HEK293 (cell line): ENCODE measurements at regions of chr16 and their contacts with region 1.

Region 1: DNA sequence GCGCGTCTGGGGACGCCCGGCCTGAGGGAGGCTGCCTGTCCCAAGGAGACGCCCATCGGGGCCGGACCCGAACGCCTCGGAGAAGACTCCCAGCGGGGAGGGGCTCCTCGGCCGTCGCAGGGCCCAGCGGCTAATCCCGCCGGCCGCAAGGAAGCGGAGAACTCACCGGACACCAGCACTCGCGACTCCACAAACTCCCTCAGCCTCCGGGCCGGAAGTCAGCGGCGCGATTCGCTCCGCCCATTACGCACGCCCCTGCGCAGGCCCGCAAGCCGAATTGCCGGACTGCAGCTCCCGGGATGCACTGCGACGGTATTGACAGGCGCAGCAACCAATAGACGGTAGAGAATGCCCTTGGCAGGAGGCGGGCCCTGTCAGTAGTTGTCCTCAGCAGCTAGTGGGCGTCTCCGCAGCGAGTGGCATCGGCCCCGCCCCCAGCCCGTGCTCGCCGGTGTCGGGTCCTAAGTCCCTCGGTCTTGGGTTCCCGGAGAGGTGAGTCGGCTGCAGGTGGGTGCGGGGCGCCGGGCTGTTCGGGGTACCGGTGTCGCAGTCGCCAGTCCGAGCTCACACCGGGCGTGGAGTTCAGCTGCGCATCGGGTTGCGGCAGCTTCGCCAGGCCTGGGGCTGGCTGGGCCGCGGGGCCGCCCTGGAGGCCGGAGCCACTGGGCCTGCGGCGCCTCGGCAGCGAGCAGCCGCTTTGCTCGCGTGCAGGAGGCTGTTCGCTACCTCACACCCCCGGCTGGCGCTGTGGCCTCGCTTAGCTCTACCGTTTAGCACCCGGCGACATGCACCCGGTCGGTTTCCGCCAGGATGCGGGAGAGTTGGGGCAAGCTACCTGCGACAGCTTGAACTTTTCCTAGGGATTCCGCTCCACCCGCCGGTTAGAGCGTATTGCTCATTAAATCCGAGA is at the starts of genes ZNF174 and ZSCAN32:
- H3K4me3 ChIP-seq: peak within 1 kb of the TSS; percentile 95
- H3K27ac ChIP-seq: peak within 1 kb of the TSS; percentile 71; the same call in 1 of the 2 replicates
- H3K4me1 ChIP-seq: no peaks in the 10 kb centered on the region
- CTCF ChIP-seq: peak; percentile 70

Region 2: DNA sequence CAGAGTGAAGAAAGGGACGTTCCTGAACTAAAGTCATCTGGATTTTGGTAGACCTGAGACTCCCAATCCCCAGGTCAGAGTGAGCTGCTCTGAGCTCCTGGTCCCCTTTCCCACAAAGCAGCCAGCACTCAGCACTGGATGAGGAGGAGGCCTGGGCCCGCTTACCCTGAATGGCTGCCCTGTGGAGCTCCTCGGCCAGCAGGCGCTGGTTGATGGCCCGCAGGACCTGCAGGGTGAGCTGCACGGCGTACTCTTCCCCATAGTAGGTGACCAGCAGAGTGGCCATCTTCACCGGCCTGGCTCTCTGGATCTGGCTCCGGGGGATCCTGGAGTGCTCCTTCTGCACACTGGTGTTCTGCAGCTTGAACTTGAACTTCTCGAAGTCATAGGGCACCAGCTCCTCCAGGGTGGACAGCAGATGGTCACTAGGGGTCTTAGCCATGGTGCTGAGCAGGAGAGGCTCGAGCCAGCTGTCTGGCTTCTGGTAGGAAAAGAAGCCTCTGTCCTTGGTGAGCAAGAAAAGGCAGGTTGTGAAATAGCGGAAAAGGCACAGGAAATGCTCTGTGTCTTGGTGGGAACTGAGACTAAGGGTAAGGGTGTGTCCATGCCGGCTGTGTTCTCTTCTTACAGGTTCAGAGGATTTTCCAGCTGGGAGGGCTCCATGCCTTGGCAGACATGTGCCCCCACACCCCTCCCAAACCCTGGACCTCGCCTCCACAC is 144.7 kb before region 1 on chr16 and contains the start of gene MEFV:
- CTCF ChIA-PET with region 1: no interaction called
- POLR2A ChIA-PET with region 1: no interaction called
- H3K4me3 ChIP-seq: no peak within 1 kb of the TSS
- H3K27ac ChIP-seq: no peak within 1 kb of the TSS
- H3K4me1 ChIP-seq: no peaks in the 10 kb centered on the region
- CTCF ChIP-seq: no peak

Region 3: DNA sequence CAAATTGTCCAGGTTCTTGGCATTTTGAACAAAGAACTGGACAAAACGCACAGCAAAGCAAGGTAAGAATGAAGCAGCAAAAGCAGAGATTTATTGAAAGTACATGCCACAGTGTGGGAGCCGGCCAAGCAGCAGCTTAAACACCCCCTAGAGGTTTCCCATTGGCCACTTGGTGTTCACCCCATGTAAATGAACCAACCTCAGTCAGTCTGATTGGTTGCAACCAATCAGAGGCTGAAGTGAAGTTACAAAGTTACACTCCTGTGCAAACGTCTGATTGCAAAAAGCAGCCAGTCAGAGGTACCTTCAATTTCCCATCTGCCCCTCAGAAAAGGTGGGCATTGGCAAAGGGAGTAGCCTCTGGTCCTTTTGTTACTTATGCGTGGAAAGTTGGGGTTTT is 126.5 kb before region 1 on chr16:
- CTCF ChIA-PET with region 1: no interaction called
- POLR2A ChIA-PET with region 1: no interaction called
- H3K4me3 ChIP-seq: no peak overlapping the region
- H3K27ac ChIP-seq: no peak overlapping the region
- H3K4me1 ChIP-seq: no peaks in the 10 kb centered on the region
- CTCF ChIP-seq: no peak

Region 4: DNA sequence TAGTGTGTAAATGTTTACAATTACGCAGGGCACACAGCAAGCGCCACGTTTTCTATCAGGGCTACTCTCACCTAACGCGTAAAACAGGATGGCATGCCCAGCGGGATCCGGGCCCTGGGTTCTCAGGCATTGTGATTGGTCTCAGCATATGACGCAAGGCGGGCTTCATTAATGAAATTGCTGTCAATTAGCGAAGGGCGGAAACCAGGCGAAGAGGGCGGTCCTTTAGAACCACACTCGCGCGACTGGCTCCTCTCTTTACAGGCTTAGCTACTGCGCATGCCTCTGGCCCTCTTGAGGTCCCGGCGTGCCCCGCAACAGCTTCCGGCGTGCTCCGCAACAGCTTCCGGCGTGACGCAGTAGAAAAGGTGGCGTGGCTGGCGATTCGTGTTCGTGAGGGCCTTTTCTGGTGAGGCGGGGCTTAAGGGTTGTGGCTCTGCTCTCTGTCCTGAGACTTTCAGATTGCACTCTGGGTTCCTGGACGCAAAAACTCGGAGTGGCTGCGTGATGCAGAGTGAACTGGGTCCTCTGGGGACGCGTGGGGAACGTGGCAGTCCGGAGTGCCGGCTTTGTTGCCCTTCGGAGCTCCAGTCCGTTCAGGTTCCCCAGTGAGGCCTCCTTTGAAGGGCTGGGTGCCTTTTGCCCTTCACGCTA is 36.1 kb before region 1 on chr16:
- CTCF ChIA-PET with region 1: no interaction called
- POLR2A ChIA-PET with region 1: interaction called, 14 read pairs
- H3K4me3 ChIP-seq: peak overlapping the region; percentile 45
- H3K27ac ChIP-seq: peak overlapping the region; percentile 70
- H3K4me1 ChIP-seq: no peaks in the 10 kb centered on the region
- CTCF ChIP-seq: no peak

Region 5: DNA sequence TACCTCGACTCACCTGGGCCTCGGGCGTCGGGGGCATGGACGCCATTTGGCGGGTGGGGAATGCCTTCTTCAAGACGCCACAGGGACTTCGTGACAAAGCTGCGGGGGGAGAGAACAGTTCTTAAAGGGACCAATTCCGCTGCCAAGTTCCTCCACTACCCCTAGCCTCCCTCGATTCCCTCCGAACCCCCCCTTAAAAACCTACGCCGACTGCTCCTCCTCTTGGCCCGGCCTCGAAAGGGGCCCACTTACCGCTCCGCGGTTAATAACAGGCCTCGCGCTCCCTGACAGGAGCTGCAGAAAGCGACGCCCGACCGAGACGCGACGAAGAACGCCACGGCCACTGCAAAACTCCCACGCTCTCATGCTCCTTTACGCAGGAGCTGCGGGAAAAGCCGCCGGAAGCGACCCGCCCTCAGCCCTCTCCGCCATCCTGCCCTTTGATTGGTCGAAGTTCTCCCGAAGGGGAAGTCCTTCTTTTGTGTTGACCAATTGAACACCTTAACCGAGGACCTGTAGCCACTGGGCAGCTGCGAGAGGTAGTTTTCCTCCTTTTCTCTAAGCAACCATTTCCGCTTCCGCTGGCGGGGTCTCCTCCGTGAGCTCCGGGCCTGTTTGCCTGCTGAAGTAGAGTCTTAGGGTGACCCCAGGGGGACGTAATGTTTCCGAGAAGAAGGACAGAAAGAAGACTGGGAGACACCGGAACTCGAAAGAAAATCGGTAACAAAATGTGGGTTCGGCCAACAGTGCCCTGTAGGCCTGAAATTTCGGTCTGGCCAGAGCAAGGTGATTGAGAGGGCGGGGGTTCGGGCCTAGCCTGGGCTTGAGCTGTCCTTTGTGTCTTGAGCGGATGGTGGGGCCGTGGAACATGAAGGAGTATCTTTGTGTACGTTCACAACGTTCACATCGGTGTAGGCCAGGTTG is 42.3 kb after region 1 on chr16 and contains the starts of genes NAA60 and ZNF597:
- CTCF ChIA-PET with region 1: no interaction called
- POLR2A ChIA-PET with region 1: interaction called, 33 read pairs
- H3K4me3 ChIP-seq: peak within 1 kb of the TSS; percentile 61
- H3K27ac ChIP-seq: peak within 1 kb of the TSS; percentile 32; the same call in 1 of the 2 replicates
- H3K4me1 ChIP-seq: no peaks in the 10 kb centered on the region
- CTCF ChIP-seq: no peak; the same call in 1 of the 2 replicates

Region 6: DNA sequence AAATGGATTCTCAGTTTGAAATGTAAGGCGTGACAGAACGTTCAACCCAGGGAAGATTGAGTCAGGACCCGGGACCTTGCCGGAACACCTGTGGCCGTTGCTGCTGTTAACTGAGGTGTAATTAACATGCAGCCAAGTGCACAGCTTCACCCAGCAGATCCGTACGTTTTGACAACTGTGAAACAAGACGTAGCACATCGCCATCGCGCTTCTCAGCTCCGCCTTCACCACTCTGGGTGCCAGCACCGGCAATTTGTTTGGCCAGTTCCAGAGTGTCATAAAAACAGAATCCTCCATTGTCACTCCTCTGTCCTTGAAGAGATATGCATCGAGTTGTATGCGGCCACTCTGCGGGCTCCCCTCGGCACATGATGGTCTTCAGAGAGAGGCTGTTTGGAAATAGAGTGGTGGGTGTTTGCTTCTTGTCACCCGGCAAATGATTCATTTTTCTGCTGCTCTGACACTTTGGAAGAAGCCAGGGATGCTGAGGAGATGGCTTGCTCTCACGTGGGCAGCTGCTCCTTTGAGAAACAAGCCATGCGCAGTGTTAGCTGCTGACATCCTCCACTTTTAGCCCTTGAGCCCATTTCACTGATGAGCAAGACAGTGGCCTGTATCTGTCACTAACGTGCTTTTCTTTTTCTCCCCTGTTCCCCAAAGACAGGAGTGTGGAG is 65.0 kb after region 1 on chr16:
- CTCF ChIA-PET with region 1: no interaction called
- POLR2A ChIA-PET with region 1: no interaction called
- H3K4me3 ChIP-seq: no peak overlapping the region
- H3K27ac ChIP-seq: no peak overlapping the region
- H3K4me1 ChIP-seq: no peaks in the 10 kb centered on the region
- CTCF ChIP-seq: no peak